ENCODE measurements at regions of chr9 and their contacts with region 1.

Region 1: GRCh38 chr9:116860509-116861120 is 173.5 kb downstream of the TRIM32 start:
- DNase-seq: peak; percentile 67
- H3K4me3 Mint-ChIP-seq: no peak overlapping the region
- H3K27ac Mint-ChIP-seq: no peak overlapping the region
- H3K4me1 Mint-ChIP-seq: no peaks in the 10 kb centered on the region
- H3K27me3 Mint-ChIP-seq: no peaks in the 10 kb centered on the region

Region 2: DNA sequence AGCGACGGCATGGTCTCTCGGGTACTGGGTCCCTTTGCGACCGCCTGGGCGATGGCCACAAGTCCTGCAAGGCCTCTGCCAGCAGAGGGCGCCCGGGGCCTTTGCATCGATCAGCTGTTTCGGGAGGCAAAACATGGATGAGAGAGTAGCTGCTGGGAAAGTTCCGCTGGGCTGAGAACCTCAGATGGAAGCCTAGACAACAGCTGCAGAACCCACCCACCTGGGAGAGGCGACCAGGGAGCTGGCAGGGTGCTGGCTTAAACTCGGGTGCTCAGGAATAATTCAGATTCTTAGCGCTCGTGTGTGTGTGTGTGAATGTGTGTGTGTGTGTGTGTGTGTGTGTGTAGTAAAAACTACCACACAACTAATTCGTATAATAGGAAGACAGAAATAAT is 123.5 kb before region 1 on chr9:
- intact Hi-C with region 1: loop called (anchors 5 kb)
- DNase-seq: peak; percentile 87
- H3K4me3 Mint-ChIP-seq: no peak overlapping the region
- H3K27ac Mint-ChIP-seq: no peak overlapping the region
- H3K4me1 Mint-ChIP-seq: no peaks in the 10 kb centered on the region
- H3K27me3 Mint-ChIP-seq: peaks cover 2% of the 10 kb centered on the region